ENCODE measurements at regions of chr19 and their contacts with region 1.

Region 1: DNA sequence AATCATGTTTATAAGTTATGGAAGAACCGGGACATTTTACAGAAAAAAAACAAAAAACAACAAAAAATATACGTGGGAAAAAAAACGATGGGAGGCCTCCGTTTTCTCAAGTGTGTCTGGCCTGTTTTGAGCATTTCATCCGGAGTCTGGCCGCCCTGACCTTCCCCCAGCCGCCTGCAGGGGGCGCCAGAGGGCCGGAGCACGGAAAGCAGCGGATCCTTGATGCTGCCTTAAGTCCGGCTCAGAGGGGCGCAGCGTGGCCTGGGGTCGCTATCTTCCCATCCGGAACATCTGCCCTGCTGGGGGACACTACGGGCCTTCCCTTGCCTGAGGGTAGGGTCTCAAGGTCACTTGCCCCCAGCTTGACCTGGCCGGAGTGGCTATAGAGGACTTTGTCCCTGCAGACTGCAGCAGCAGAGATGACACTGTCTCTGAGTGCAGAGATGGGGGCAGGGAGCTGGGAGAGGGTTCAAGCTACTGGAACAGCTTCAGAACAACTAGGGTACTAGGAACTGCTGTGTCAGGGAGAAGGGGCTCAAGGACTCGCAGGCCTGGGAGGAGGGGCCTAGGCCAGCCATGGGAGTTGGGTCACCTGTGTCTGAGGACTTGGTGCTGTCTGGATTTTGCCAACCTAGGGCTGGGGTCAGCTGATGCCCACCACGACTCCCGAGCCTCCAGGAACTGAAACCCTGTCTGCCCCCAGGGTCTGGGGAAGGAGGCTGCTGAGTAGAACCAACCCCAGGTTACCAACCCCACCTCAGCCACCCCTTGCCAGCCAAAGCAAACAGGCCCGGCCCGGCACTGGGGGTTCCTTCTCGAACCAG is 1.8 kb upstream of the APOE start:
- DNase-seq: peak; percentile 79 to 84
- ATAC-seq: peak; percentile 54 to 68
- H3K4me3 ChIP-seq: no peak overlapping the region
- H3K27ac ChIP-seq: peak overlapping the region in 1 of 2 experiments; percentile 56; a peak in 3 of 6 replicates
- H3K4me1 ChIP-seq: peaks cover 29% of the 10 kb centered on the region
- CTCF ChIP-seq: peak; percentile 98
- EP300 ChIP-seq: no peak
- POLR2A ChIP-seq: no peak
- RAD21 ChIP-seq: peak; percentile 85 to 89

Region 2: GRCh38 chr19:44883922-44884321 is 19.9 kb before region 1 on chr19:
- CTCF ChIA-PET with region 1: interaction called, 37 read pairs
- POLR2A ChIA-PET with region 1: no interaction called
- DNase-seq: no peak
- ATAC-seq: no peak
- H3K4me3 ChIP-seq: no peak overlapping the region
- H3K27ac ChIP-seq: no peak overlapping the region
- H3K4me1 ChIP-seq: no peaks in the 10 kb centered on the region
- CTCF ChIP-seq: no peak
- EP300 ChIP-seq: no peak
- POLR2A ChIP-seq: no peak
- RAD21 ChIP-seq: no peak

Region 3: GRCh38 chr19:44891016-44891823 is 12.6 kb before region 1 on chr19 and contains the start of gene TOMM40:
- CTCF ChIA-PET with region 1: interaction called, 38 read pairs
- POLR2A ChIA-PET with region 1: interaction called, 7 read pairs
- DNase-seq: peak; percentile 99 to 100
- ATAC-seq: peak in 1 of 2 experiments; percentile 84; a peak in 3 of 6 replicates
- H3K4me3 ChIP-seq: peak within 1 kb of the TSS; percentile 93
- H3K27ac ChIP-seq: peak within 1 kb of the TSS; percentile 93 to 96
- H3K4me1 ChIP-seq: peaks cover 23% of the 10 kb centered on the region
- CTCF ChIP-seq: no peak
- EP300 ChIP-seq: no peak
- POLR2A ChIP-seq: peak; percentile 65
- RAD21 ChIP-seq: no peak
- polyA plus RNA-seq, gene TOMM40: 83.6 and 92.7 TPM in 2 replicates

Region 4: DNA sequence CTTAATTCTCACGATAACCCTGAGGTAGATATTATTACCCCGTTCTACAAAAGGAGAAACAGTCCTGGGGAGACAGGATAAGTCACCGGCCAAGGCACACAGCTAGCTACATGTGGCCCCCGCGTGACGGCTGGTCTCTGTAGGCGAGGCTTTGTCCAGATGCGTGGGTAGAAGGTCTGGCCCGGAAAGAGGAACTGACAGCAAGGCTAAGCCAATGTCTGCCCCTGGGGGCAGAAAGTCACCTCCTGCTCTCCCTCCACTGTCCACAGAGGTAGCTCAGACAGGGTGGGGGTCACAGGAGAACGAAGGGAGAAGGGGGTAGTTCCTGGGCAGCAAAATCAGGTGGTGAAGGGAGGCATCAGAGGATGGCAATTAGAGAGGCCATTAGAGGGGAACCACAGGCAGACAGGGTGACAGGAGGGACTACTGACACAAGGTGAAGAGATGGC is 40.0 kb after region 1 on chr19:
- CTCF ChIA-PET with region 1: interaction called, 303 read pairs
- POLR2A ChIA-PET with region 1: no interaction called
- DNase-seq: no peak
- ATAC-seq: peak in 1 of 2 experiments; percentile 29; a peak in 3 of 6 replicates
- H3K4me3 ChIP-seq: no peak overlapping the region
- H3K27ac ChIP-seq: no peak overlapping the region
- H3K4me1 ChIP-seq: no peaks in the 10 kb centered on the region
- CTCF ChIP-seq: no peak
- EP300 ChIP-seq: no peak
- POLR2A ChIP-seq: no peak
- RAD21 ChIP-seq: no peak

Region 5: DNA sequence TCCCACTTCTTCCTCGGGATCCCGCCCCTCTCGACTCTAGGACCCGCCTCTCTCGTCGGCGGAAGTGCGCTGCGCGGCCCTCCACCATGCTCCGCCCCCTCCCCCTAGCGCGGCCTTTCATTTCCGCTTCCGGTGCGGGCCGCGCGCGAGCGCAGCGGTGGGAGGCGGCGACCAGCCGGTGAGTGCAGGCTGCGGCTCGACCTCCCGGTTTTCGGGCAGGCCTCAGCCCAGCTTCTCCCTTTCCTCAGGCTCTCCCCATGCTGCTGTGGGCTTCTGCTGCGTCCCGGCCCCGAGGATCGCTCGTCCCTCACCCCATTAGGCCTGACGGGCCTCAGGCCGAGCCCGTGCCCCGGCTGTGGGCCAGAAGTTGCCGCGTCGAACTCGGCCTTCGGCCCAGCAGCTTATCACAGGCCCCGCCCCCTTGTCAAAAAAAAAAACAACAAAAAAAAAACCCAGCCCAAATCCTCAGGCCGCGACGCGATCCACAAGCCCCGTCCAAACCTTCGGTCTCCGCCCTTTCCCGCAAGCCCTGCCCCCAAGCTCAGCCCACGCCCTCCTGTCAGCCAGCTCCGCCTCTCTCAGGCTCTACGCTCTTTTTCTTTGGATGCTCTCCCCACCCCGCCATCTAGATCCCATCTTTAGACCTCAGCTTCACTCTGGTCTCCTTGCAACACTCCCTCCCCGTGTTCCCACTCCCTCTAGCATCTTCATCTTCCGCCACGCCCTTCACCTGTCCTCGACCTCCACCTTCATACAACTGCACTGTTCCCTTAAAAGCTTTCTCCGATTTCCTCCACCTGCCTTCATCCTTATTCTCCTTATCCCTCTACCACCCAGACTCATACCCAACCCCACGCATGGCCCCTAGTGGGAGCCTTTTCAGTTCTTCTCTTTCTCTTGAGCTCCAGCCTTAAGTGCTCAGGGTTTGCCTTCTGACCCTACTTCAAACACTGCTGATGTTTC is 135.4 kb after region 1 on chr19 and contains the start of gene CLASRP:
- CTCF ChIA-PET with region 1: interaction called, 14 read pairs
- POLR2A ChIA-PET with region 1: interaction called, 3 read pairs
- DNase-seq: peak; percentile 90 to 92
- ATAC-seq: peak; percentile 99
- H3K4me3 ChIP-seq: peak within 1 kb of the TSS; percentile 72
- H3K27ac ChIP-seq: peak within 1 kb of the TSS; percentile 85 to 90
- H3K4me1 ChIP-seq: peaks cover 11% of the 10 kb centered on the region
- CTCF ChIP-seq: no peak
- EP300 ChIP-seq: no peak
- POLR2A ChIP-seq: peak; percentile 92
- RAD21 ChIP-seq: no peak
- polyA plus RNA-seq, gene CLASRP: 30.7 and 39.0 TPM in 2 replicates